ENCODE measurements at regions of chr3 and their contacts with region 1.

Region 1: GRCh38 chr3:11671648-11672100 is 28.0 kb upstream of the VGLL4 start:
- DNase-seq: no peak
- H3K4me3 ChIP-seq: no peak overlapping the region
- H3K4me3 Mint-ChIP-seq: no peak overlapping the region
- H3K27ac ChIP-seq: no peak overlapping the region
- H3K27ac Mint-ChIP-seq: peak overlapping the region in 1 of 8 donors; percentile 14
- H3K4me1 ChIP-seq: no peaks in the 10 kb centered on the region
- H3K4me1 Mint-ChIP-seq: peaks cover 0 to 18% (median 2%) of the 10 kb centered on the region in 3 donors
- H3K27me3 ChIP-seq: no peaks in the 10 kb centered on the region
- H3K27me3 Mint-ChIP-seq: no peaks in the 10 kb centered on the region

Region 2: GRCh38 chr3:12471243-12471651 is 799.6 kb after region 1 on chr3:
- CTCF ChIA-PET with region 1: no interaction called
- POLR2A ChIA-PET with region 1: interaction called, 10 read pairs
- DNase-seq: no peak
- H3K4me3 ChIP-seq: no peak overlapping the region
- H3K4me3 Mint-ChIP-seq: no peak overlapping the region
- H3K27ac ChIP-seq: no peak overlapping the region
- H3K27ac Mint-ChIP-seq: no peak overlapping the region
- H3K4me1 ChIP-seq: no peaks in the 10 kb centered on the region
- H3K4me1 Mint-ChIP-seq: peaks cover 4 to 19% (median 5%) of the 10 kb centered on the region in 3 donors
- H3K27me3 ChIP-seq: no peaks in the 10 kb centered on the region
- H3K27me3 Mint-ChIP-seq: peaks cover 0 to 9% of the 10 kb centered on the region in 2 donors